ENCODE measurements at regions of chr9 and their contacts with region 1.

Region 1: GRCh38 chr9:20356403-20357035 is 265.8 kb downstream of the MLLT3 start:
- DNase-seq: peak; percentile 70
- H3K4me3 Mint-ChIP-seq: no peak overlapping the region
- H3K27ac Mint-ChIP-seq: no peak overlapping the region
- H3K4me1 Mint-ChIP-seq: peaks cover 8% of the 10 kb centered on the region
- H3K27me3 Mint-ChIP-seq: no peaks in the 10 kb centered on the region
- CTCF ChIP-seq: peak; percentile 76

Region 2: DNA sequence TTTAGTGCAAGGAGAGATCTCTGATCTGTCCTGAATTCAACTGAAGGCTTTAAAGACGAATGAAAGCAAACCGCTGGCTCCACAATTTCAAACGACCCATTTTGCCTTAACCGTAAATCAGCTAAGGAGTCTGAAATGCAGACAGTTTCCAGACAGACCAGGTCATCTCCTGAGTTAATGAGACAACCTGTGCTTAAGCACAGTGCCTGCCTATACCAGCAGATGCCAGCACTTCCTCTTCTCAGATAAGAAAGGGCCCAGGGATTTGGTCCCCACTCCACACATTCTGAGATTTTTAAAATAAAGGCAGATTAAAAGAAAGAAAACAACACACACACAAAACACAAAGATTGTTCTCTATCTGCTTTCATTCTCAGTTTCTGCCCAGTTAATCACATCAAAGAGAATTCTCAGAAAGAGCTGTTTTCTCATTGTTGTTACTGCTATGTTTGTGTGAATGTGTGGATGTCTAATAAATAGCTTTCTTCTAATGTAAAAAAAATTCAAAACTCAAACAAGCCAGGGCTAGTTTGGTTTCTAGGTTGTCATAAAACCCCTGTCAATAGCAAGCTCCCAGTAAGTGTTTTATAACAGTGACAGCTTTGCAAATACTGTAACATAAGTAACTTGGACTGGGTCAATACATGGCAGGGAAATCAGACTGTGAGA is 409.9 kb before region 1 on chr9:
- CTCF ChIA-PET with region 1: interaction called, 15 read pairs
- POLR2A ChIA-PET with region 1: no interaction called
- intact Hi-C with region 1: loop called (anchors 1 kb)
- DNase-seq: peak; percentile 11
- H3K4me3 Mint-ChIP-seq: no peak overlapping the region
- H3K27ac Mint-ChIP-seq: no peak overlapping the region
- H3K4me1 Mint-ChIP-seq: no peaks in the 10 kb centered on the region
- H3K27me3 Mint-ChIP-seq: peaks cover 16% of the 10 kb centered on the region
- CTCF ChIP-seq: peak; percentile 28

Region 3: GRCh38 chr9:20319641-20320337 is 36.7 kb before region 1 on chr9:
- CTCF ChIA-PET with region 1: interaction called, 19 read pairs
- POLR2A ChIA-PET with region 1: interaction called, 6 read pairs
- intact Hi-C with region 1: no loop called
- DNase-seq: peak; percentile 53
- H3K4me3 Mint-ChIP-seq: no peak overlapping the region
- H3K27ac Mint-ChIP-seq: peak overlapping the region; percentile 50
- H3K4me1 Mint-ChIP-seq: peaks cover 41% of the 10 kb centered on the region
- H3K27me3 Mint-ChIP-seq: no peaks in the 10 kb centered on the region
- CTCF ChIP-seq: no peak

Region 4: DNA sequence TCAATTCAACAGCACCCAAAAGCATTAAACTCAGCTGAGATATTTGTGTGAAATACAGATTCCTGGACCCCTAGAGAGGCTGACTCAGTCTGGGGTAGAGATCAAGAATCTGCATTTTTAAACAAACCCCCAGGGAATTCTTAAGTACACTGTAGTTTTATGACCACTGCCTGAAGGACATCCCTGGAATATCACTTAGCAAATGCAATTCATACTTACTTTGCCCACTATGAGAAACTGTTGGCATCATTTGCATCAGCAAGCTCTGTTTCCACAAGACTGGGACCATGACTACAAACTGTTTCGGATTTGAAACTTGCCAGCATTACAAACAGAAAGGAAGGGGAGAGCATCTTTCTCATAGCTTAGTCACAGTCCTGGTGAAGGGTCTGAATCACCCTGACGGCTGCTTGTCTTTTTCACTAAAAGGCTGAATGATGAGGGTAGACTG is 202.1 kb after region 1 on chr9:
- CTCF ChIA-PET with region 1: interaction called, 4 read pairs
- POLR2A ChIA-PET with region 1: no interaction called
- intact Hi-C with region 1: loop called (anchors 5 kb)
- DNase-seq: peak; percentile 27
- H3K4me3 Mint-ChIP-seq: no peak overlapping the region
- H3K27ac Mint-ChIP-seq: no peak overlapping the region
- H3K4me1 Mint-ChIP-seq: no peaks in the 10 kb centered on the region
- H3K27me3 Mint-ChIP-seq: peaks cover 55% of the 10 kb centered on the region
- CTCF ChIP-seq: no peak

Region 5: DNA sequence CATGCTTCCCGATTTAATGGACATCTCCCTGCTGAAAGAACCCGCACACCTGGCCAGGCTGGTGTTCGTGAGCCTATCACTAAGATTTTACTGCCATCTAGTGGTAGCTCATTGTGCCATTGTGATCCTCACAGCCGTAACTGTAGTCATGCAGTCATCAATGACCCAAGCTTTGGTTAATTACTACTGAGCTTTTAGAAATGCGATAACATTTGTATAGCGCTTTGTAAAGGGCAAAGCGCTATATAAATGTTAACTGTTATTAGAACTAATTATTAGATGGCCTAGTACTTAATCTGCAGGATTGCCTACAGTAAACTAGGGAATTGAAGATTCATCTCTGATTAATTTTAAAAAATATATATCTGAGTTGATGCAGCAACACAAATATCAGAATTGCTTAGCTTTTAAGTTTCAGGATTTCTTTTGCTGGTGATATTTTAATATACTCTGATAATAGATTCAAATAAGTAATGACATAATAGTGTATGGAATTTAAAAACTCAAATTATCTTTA is 584.7 kb after region 1 on chr9:
- CTCF ChIA-PET with region 1: interaction called, 6 read pairs
- POLR2A ChIA-PET with region 1: interaction called, 5 read pairs
- intact Hi-C with region 1: loop called (anchors 1 kb)
- DNase-seq: peak; percentile 61
- H3K4me3 Mint-ChIP-seq: no peak overlapping the region
- H3K27ac Mint-ChIP-seq: no peak overlapping the region
- H3K4me1 Mint-ChIP-seq: no peaks in the 10 kb centered on the region
- H3K27me3 Mint-ChIP-seq: no peaks in the 10 kb centered on the region
- CTCF ChIP-seq: peak; percentile 53

Region 6: DNA sequence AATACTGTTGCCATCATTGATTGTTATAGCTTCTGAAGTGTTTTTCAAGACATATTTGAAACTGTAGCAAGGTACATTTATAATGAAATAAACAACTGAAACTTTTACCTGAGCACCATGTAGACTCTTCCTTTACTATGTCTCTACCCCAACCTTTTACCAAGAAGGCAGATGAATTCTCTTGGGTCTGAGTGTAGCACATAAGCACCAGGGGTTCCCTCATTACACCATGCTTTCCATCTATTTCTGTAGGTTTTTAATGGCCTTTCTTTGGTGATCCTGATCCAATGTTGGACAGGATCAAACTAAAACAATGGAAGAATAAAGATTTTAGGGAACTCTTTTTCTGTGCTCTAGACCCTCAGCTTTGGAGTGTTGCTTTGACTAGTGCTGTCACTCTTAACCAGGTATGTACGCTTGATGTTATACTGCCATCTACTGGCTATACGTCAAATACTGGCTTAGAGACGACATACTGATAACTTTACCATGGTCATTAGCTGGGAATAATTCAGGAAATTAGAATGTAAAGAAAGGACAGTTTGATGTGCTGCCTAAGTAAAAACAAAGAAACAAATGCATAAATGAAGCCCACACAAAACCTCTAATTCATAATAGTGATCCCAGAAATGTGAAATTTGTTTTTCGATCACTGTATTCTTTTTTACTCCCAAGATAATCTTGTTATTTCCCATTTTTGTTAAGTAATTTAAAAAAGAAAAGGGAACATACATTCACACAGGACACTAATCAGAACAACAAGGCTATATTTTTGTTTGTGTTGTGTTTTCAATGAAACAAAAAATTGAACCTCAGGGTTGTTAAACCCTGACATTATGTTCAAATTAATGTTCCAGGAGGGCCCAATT is 754.4 kb after region 1 on chr9:
- CTCF ChIA-PET with region 1: interaction called, 10 read pairs
- POLR2A ChIA-PET with region 1: no interaction called
- intact Hi-C with region 1: loop called (anchors 1 kb)
- DNase-seq: peak; percentile 63
- H3K4me3 Mint-ChIP-seq: no peak overlapping the region
- H3K27ac Mint-ChIP-seq: no peak overlapping the region
- H3K4me1 Mint-ChIP-seq: no peaks in the 10 kb centered on the region
- H3K27me3 Mint-ChIP-seq: peaks cover 25% of the 10 kb centered on the region
- CTCF ChIP-seq: peak; percentile 42

Measured in MCF 10A (cell line).